ENCODE measurements at regions of chr1 and their contacts with region 1.

Region 1: GRCh38 chr1:115722221-115722620 is 46.3 kb downstream of the CASQ2 start:
- DNase-seq: no peak
- H3K4me3 ChIP-seq: no peak overlapping the region
- H3K27ac ChIP-seq: no peak overlapping the region
- H3K4me1 ChIP-seq: no peaks in the 10 kb centered on the region
- H3K27me3 ChIP-seq: no peaks in the 10 kb centered on the region
- CTCF ChIP-seq: no peak

Region 2: DNA sequence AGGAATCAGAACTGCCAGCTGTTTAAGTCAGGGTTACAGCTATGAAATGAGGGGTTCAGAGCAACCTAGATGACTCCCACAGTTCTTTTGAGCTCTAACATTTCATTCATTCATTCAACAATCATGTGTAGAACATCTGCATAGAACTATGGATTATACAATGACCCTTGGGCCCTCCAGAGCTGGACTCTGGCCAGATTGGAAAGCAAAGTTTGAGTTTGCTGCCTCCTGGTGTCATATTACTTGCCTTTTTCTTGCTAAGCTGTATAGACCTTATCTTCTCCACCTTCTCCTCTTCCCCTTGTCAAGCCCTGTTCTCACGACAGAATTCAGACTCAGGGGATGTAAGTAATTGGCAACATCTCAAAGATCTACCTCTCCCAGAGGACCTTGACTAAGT is 42.3 kb after region 1 on chr1:
- intact Hi-C with region 1: loop called (anchors 5 kb)
- DNase-seq: peak; percentile 28
- H3K4me3 ChIP-seq: no peak overlapping the region
- H3K27ac ChIP-seq: no peak overlapping the region
- H3K4me1 ChIP-seq: no peaks in the 10 kb centered on the region
- H3K27me3 ChIP-seq: no peaks in the 10 kb centered on the region
- CTCF ChIP-seq: no peak